Aorta (tissue), 5 donors: ENCODE measurements at regions of chr19 and their contacts with region 1.

Region 1: GRCh38 chr19:1131738-1132551 is 28.2 kb downstream of the GPX4 start:
- DNase-seq: peak; percentile 96 to 97
- ATAC-seq: peak; percentile 87
- H3K4me3 ChIP-seq: peak overlapping the region; percentile 50 to 70
- H3K27ac ChIP-seq: peak overlapping the region; percentile 34 to 70
- H3K4me1 ChIP-seq: no peaks in the 10 kb centered on the region
- H3K27me3 ChIP-seq: no peaks in the 10 kb centered on the region

Region 2: GRCh38 chr19:1151917-1152617 is 20.1 kb after region 1 on chr19:
- intact Hi-C with region 1: loop called in 1 of 2 experiments (anchors 2 kb)
- DNase-seq: peak in 1 of 2 donors; percentile 76
- ATAC-seq: no peak
- H3K4me3 ChIP-seq: no peak overlapping the region
- H3K27ac ChIP-seq: no peak overlapping the region
- H3K4me1 ChIP-seq: no peaks in the 10 kb centered on the region
- H3K27me3 ChIP-seq: no peaks in the 10 kb centered on the region

Region 3: GRCh38 chr19:1173845-1174809 is 42.2 kb after region 1 on chr19 and contains the start of gene SBNO2:
- intact Hi-C with region 1: loop called (anchors 5 kb)
- DNase-seq: peak; percentile 90 to 98
- ATAC-seq: peak; percentile 91
- H3K4me3 ChIP-seq: peak within 1 kb of the TSS; percentile 84 to 86
- H3K27ac ChIP-seq: peak within 1 kb of the TSS in 1 of 2 donors; percentile 34
- H3K4me1 ChIP-seq: no peaks in the 10 kb centered on the region
- H3K27me3 ChIP-seq: no peaks in the 10 kb centered on the region
- total RNA-seq, gene SBNO2: 97.2 to 165 TPM

Region 4: DNA sequence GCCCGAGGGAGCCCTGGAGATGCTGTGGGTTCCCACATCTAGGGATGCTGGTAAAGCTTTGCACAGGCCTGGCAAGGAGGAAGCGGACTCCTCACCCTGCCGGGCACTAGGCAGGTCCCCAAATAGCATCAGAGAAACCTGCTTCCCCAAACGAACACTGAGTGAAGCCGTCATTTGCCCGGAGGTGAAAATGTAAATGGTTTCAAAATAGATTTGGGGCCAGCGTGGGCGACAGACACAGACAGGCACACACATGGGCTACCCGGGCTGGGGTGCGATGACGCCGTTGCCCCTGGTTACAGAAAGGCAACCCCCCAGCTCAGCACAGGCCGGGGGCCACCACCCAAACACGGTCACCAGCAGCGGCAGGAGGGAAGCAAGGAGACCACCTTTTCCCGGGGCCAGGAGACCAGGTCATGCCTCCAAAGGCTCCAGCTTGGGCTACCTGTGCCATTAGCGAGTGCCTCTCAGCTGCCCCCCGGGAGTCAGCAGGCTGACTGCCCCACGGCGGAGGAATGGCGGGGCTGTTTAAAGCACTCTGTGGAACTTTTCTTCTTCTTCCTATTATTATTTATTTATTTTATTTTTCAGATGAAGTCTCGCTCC is 204.2 kb after region 1 on chr19:
- intact Hi-C with region 1: no loop called
- DNase-seq: no peak
- ATAC-seq: no peak
- H3K4me3 ChIP-seq: no peak overlapping the region
- H3K27ac ChIP-seq: no peak overlapping the region
- H3K4me1 ChIP-seq: no peaks in the 10 kb centered on the region
- H3K27me3 ChIP-seq: no peaks in the 10 kb centered on the region